ENCODE measurements at regions of chr10 and their contacts with region 1.

Region 1: DNA sequence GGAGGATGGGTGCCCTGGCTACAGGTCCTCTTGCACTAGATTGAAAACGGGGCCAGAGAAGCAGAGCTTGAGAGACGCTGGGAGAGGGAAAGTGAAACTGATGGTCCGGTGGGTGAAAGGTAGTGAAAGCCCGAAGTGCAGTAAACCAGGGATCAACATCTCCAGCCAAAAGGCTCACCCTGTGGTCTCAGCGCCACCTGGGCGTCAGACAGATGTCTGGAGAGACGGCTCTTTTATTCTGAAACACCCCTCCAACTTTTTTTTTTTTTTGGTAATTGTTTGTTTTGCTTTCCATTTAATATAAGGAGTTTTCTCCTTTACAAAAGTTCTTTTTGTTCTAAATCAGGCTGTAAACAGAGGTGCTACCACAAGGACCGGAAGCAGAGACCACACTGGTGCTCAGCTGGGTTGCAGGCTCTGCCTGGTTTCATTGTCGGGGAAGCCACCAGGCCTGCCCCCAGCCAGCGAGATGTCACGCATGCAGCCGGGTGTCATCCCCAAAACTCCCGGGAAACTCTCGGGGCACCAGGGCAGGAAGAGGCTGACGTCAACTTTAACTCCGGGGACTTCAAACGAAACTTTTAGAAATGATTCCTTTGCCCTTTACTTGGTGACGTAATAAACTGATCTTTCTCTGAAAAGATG is 11.2 kb downstream of the IL2RA start:
- DNase-seq: peak; percentile 98
- H3K4me3 Mint-ChIP-seq: peak overlapping the region; percentile 81
- H3K27ac Mint-ChIP-seq: peak overlapping the region; percentile 96
- H3K4me1 Mint-ChIP-seq: peaks cover 82% of the 10 kb centered on the region
- H3K27me3 Mint-ChIP-seq: no peaks in the 10 kb centered on the region

Region 2: DNA sequence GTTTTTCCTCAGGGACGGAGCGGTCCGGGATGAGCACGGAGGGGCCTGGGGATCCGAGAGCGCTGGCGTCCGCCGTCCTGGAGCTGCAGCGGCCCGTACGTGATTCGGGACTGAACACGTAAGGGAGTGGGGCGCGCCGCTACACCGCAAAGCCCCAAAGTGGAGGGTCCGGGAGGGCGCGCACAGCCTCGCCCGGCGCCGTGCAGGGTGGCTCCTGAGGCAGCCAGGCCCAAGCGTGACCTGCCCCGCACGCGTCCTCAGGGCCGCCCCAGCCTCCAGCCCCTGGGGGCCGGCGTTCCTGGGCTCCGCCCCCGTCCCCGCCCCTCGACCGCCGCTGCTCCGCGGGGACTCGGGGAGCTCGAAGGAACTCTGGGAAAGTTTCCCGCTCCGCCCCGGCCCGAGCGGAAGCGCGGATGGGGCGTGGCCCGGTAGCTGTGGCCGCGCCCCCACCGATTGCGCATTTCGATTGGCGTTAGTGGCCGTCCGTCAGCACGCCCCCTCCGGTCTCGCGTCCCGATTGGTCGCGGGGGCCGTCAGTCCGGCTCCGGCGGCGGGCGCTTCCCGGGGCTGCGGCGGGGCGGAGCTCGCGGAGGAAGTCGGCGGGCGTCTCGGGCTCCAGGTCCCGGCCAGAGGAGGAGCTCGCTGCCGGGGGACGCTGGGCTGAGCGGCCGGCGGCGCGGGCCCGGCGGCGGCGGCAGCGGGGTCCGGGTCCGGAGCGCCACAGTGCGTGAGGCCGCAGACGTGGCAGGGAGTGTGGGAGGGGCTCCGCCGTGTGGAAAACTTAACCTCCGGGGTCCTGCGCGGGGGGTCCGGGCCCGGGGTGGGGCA is 161.1 kb before region 1 on chr10 and contains the starts of genes ANKRD16 and FBH1:
- intact Hi-C with region 1: loop called (anchors 5 kb)
- DNase-seq: peak; percentile 100
- H3K4me3 Mint-ChIP-seq: peak within 1 kb of the TSS; percentile 94
- H3K27ac Mint-ChIP-seq: peak within 1 kb of the TSS; percentile 85
- H3K4me1 Mint-ChIP-seq: peaks cover 40% of the 10 kb centered on the region
- H3K27me3 Mint-ChIP-seq: no peaks in the 10 kb centered on the region
- total RNA-seq, gene ANKRD16: 10.8 and 12.2 TPM in 2 replicates
- total RNA-seq, gene FBH1: 58.4 and 62.9 TPM in 2 replicates

Region 3: GRCh38 chr10:6014241-6014761 is 36.6 kb before region 1 on chr10:
- intact Hi-C with region 1: loop called (anchors 5 kb)
- DNase-seq: peak; percentile 89
- H3K4me3 Mint-ChIP-seq: peak overlapping the region; percentile 59
- H3K27ac Mint-ChIP-seq: peak overlapping the region; percentile 81
- H3K4me1 Mint-ChIP-seq: peaks cover 51% of the 10 kb centered on the region
- H3K27me3 Mint-ChIP-seq: no peaks in the 10 kb centered on the region

Region 4: GRCh38 chr10:6072215-6072934 is 21.5 kb after region 1 on chr10:
- intact Hi-C with region 1: loop called (anchors 1 kb)
- DNase-seq: peak; percentile 81
- H3K4me3 Mint-ChIP-seq: peak overlapping the region; percentile 70
- H3K27ac Mint-ChIP-seq: peak overlapping the region; percentile 98
- H3K4me1 Mint-ChIP-seq: peaks cover 81% of the 10 kb centered on the region
- H3K27me3 Mint-ChIP-seq: no peaks in the 10 kb centered on the region

Region 5: DNA sequence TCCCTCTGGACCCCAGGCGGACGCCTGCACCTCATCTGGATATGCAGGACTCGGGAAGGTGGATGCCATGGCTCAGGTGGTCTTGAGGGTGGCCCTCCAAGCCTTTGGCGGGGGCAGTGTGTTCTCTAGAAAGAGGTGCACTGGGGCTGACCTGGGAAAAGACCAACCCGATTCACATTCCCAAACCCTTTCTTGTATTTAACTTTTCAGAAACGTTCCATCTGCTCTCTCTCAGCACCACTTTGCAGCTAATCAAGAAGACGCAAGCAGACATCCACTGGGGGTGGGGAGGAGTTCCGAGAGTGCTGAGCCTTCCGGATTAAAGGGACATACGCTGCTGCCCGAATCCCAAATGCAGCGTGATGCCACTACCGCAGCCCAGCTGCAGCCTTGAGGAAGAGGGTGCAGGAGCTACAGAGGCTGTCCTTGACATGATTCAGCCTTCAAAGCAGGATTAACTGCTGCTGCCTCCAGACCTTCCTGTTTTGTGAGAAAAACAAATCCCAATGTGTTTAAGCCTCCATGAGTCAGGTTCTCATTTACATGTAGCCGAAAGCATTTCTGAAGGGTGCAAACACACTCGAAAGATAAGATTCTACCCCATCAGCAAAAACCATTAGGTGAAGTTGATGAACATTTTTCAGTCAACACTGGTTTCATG is 77.8 kb after region 1 on chr10:
- intact Hi-C with region 1: loop called (anchors 2 kb)
- DNase-seq: no peak
- H3K4me3 Mint-ChIP-seq: peak overlapping the region; percentile 70
- H3K27ac Mint-ChIP-seq: peak overlapping the region; percentile 94
- H3K4me1 Mint-ChIP-seq: peaks cover 36% of the 10 kb centered on the region
- H3K27me3 Mint-ChIP-seq: no peaks in the 10 kb centered on the region

Region 6: GRCh38 chr10:6593241-6593671 is 542.3 kb after region 1 on chr10:
- intact Hi-C with region 1: loop called (anchors 10 kb)
- DNase-seq: peak; percentile 77
- H3K4me3 Mint-ChIP-seq: peak overlapping the region; percentile 51
- H3K27ac Mint-ChIP-seq: peak overlapping the region; percentile 93
- H3K4me1 Mint-ChIP-seq: peaks cover 82% of the 10 kb centered on the region
- H3K27me3 Mint-ChIP-seq: no peaks in the 10 kb centered on the region